IMR-90 (cell line): ENCODE measurements at regions of chr7 and their contacts with region 1.

Region 1: DNA sequence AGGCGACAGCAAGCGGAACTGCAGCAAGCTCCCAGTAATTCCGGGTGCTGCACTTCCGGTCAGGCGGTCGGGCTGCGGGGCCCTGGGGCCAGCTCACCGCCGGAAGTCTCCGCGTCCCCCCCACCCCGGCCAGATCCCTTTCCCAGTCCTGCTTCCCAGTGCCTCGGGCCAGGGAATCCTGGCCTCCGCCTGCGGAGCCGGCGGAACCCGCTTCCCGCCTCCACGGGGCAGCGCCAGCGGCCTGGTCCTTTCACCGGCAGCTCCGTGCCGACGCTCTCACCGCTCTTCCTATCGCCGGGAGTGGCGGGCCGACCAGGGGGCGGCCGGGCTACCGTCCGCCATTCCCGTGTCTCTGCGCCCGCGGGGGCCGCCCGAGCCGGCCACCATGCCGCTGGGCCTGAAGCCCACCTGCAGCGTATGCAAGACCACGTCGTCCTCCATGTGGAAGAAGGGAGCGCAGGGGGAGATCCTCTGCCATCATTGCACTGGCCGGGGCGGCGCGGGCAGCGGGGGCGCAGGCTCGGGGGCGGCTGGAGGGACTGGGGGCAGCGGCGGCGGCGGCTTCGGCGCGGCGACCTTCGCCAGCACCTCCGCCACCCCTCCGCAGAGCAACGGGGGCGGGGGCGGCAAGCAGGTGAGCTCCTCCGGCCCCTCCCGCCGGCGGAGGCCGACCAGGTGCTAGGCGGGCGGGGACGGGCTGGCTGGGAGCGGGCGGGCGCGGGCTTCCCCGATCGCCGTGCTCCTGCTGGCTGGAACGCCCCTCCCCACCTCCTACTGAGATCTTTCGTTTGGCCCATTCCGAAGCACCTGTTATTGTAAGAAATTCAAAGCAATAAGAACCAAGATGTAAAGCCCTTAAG is at the start of gene GATAD1:
- DNase-seq: peak; percentile 91
- ATAC-seq: peak; percentile 97
- H3K4me3 ChIP-seq: peak within 1 kb of the TSS; percentile 94
- H3K27ac ChIP-seq: peak within 1 kb of the TSS; percentile 89
- H3K4me1 ChIP-seq: 0 out of 2 replicates have a peak, but pooled peaks cover 2% of the 10 kb centered on the region
- H3K27me3 ChIP-seq: no peaks in the 10 kb centered on the region
- CTCF ChIP-seq: peak; percentile 97
- POLR2A ChIP-seq: peak; percentile 81
- RAD21 ChIP-seq: no peak
- total RNA-seq, gene GATAD1: 9.3 and 10.3 TPM in 2 replicates

Region 2: GRCh38 chr7:91264046-91264923 is 1183.3 kb before region 1 on chr7 and contains the start of gene FZD1:
- CTCF ChIA-PET with region 1: no interaction called
- POLR2A ChIA-PET with region 1: no interaction called
- dilution Hi-C with region 1: no loop called
- in situ Hi-C with region 1: no loop called
- intact Hi-C with region 1: loop called (anchors 1 kb)
- DNase-seq: peak; percentile 99
- ATAC-seq: peak; percentile 89
- H3K4me3 ChIP-seq: peak within 1 kb of the TSS; percentile 75
- H3K27ac ChIP-seq: peak within 1 kb of the TSS; percentile 89
- H3K4me1 ChIP-seq: peaks cover 4% of the 10 kb centered on the region
- H3K27me3 ChIP-seq: no peaks in the 10 kb centered on the region
- CTCF ChIP-seq: no peak
- POLR2A ChIP-seq: peak; percentile 63; the same call in 1 of the 2 replicates
- RAD21 ChIP-seq: peak; percentile 25; the same call in 1 of the 2 replicates
- total RNA-seq, gene FZD1: 3.6 and 4.4 TPM in 2 replicates

Region 3: DNA sequence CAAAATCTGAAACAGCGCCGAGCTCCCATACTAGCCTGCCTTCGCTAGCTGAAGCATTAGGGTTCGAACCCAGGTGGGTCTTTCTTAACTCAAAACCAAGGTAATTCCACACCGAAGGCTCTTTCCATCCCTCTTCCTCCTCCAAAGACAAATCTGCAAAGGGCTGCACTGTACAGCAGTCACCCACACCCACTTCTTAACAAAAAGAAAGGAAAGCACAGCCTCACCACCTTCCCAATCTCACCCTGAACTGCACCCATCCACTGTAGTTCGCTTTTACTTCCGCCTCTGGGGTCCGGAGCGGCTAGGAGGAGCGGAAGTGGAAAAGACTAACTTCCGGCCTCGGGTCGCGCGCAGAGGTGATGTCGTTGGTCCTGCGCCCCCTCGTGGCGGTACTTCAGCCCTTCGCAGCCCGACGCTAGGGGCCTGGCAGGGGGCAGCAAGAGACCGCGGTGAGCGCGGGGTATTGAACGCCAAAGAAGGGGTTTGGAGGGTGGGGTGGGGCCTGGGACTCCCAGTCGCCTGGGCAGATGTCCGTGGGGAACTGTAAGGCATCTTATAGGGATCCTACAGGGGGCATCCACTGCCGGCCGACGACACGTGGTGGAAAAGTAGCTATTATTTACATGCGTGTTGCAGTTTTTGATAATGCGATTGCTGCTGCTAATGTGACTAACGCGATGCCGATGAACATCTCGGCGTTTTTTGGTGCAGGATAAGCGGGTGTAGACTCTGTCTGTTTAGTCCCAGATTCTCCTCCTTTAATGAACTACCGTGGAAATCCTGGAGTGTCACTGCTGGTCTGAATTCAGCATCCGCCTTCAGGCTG is 566.9 kb before region 1 on chr7 and contains the start of gene MTERF1:
- CTCF ChIA-PET with region 1: interaction called, 4 read pairs
- POLR2A ChIA-PET with region 1: no interaction called
- dilution Hi-C with region 1: no loop called
- in situ Hi-C with region 1: loop called (anchors 10 kb)
- intact Hi-C with region 1: loop called (anchors 1 kb)
- DNase-seq: peak; percentile 88
- ATAC-seq: peak; percentile 96
- H3K4me3 ChIP-seq: peak within 1 kb of the TSS; percentile 97
- H3K27ac ChIP-seq: peak within 1 kb of the TSS; percentile 77
- H3K4me1 ChIP-seq: no peaks in the 10 kb centered on the region
- H3K27me3 ChIP-seq: no peaks in the 10 kb centered on the region
- CTCF ChIP-seq: peak; percentile 100
- POLR2A ChIP-seq: peak; percentile 45; the same call in 1 of the 2 replicates
- RAD21 ChIP-seq: peak; percentile 73
- total RNA-seq, gene MTERF1: 7.0 and 16.7 TPM in 2 replicates

Region 4: DNA sequence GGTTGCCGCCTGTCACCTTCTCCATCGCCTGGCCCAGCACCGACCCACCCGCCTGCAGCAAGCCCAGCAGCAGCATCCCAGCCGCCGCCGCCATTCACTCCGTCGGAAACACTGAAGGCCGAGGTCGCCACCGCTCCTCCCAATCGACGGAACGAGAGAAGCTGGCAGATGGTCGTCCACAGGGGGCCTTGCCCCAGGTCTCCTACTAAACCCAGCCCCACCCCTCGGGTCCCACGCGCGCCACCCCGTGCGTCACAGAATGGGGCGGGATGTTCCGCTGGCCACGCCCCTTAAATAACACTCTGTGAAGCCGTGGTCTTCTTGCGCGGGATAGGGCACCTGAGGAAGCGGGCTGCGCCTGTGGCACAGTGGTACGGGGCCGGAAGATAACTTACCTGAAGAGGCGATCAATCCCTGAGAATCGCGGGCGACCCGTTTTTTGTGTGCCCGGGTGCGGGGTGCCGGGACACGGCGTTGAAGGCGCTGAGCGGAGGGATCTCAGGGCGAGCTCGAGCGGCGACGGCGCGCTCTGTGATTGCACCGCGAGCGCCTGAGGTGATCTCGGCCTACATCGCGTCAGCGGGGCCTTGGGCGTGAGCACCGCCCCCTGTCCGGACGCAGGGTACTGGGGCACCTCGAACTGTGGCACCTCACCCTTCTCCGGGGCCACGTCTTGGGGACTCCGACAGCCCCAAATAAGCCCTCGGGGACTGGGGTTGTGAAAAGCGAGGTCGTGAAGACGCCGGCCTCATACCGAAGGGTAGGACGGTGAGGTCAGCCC is 313.1 kb before region 1 on chr7 and contains the start of gene CYP51A1:
- CTCF ChIA-PET with region 1: no interaction called
- POLR2A ChIA-PET with region 1: no interaction called
- dilution Hi-C with region 1: no loop called
- in situ Hi-C with region 1: no loop called
- intact Hi-C with region 1: loop called (anchors 2 kb)
- DNase-seq: peak; percentile 86
- ATAC-seq: peak; percentile 90
- H3K4me3 ChIP-seq: peak within 1 kb of the TSS; percentile 80
- H3K27ac ChIP-seq: peak within 1 kb of the TSS; percentile 94
- H3K4me1 ChIP-seq: no peaks in the 10 kb centered on the region
- H3K27me3 ChIP-seq: no peaks in the 10 kb centered on the region
- CTCF ChIP-seq: no peak
- POLR2A ChIP-seq: peak; percentile 73
- RAD21 ChIP-seq: no peak
- total RNA-seq, gene CYP51A1: 76.4 and 92.8 TPM in 2 replicates

Region 5: DNA sequence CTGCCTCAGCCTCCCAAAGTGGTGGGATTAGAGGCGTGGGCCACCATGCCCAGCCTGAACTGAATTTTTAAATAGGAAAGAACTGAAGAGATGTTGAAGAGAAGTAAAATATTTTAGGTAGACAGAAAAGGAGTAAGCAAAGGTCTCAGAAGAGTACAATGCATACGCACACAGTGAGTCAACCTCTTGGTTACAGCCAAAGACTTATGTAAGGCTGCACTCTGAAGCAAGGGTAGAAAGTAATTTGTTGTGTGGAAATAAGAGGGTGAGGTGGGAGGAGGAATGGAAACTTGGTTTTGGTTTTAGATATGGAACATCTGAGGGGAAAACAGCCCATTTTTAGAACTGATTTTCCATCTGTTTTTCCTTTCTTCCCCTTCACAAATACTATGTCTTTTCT is 219.5 kb before region 1 on chr7:
- CTCF ChIA-PET with region 1: no interaction called
- POLR2A ChIA-PET with region 1: no interaction called
- dilution Hi-C with region 1: no loop called
- in situ Hi-C with region 1: no loop called
- intact Hi-C with region 1: loop called (anchors 5 kb)
- DNase-seq: peak; percentile 15
- ATAC-seq: no peak
- H3K4me3 ChIP-seq: no peak overlapping the region
- H3K27ac ChIP-seq: no peak overlapping the region
- H3K4me1 ChIP-seq: no peaks in the 10 kb centered on the region
- H3K27me3 ChIP-seq: no peaks in the 10 kb centered on the region
- CTCF ChIP-seq: no peak
- POLR2A ChIP-seq: no peak
- RAD21 ChIP-seq: no peak

Region 6: DNA sequence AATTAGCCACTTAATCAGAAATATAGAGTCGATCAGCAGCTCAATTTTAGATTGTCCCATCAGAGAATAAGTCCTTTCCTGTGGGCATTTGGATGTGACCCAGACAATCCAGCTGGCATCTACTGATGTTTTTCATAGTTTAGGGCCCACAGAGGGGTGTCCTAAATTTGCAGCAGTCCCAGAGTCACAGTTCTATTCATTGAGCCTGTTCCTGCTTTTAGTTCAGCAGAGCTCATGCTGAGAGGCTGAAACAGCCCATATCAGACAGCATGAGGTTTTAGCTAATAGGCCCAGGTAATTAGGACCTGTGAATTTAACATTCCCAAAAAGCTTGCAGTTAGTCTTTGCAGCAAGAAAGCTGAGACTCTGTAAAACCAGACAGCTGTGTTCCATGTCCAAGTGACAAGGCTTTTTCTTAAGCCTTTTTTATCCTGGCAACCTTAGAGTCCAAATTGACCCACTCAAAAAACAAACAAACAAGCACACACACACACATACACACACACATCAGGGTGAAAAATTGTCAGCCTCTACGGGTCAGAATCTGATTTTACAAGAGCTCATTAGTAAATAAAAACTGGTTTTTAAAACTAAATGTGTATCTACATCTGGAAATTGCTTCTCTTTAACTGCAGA is 168.1 kb before region 1 on chr7:
- CTCF ChIA-PET with region 1: no interaction called
- POLR2A ChIA-PET with region 1: no interaction called
- dilution Hi-C with region 1: no loop called
- in situ Hi-C with region 1: no loop called
- intact Hi-C with region 1: no loop called
- DNase-seq: no peak
- ATAC-seq: no peak
- H3K4me3 ChIP-seq: no peak overlapping the region
- H3K27ac ChIP-seq: no peak overlapping the region
- H3K4me1 ChIP-seq: peaks cover 2% of the 10 kb centered on the region; the same call in 1 of the 2 replicates
- H3K27me3 ChIP-seq: no peaks in the 10 kb centered on the region
- CTCF ChIP-seq: no peak
- POLR2A ChIP-seq: no peak
- RAD21 ChIP-seq: no peak

Region 7: GRCh38 chr7:92425321-92425947 is 22.1 kb before region 1 on chr7:
- CTCF ChIA-PET with region 1: interaction called, 19 read pairs
- POLR2A ChIA-PET with region 1: no interaction called
- dilution Hi-C with region 1: no loop called
- in situ Hi-C with region 1: no loop called
- intact Hi-C with region 1: loop called (anchors 2 kb)
- DNase-seq: no peak
- ATAC-seq: no peak
- H3K4me3 ChIP-seq: no peak overlapping the region
- H3K27ac ChIP-seq: no peak overlapping the region
- H3K4me1 ChIP-seq: no peaks in the 10 kb centered on the region; the same call in 1 of the 2 replicates
- H3K27me3 ChIP-seq: peaks cover 3% of the 10 kb centered on the region
- CTCF ChIP-seq: no peak
- POLR2A ChIP-seq: no peak
- RAD21 ChIP-seq: no peak

Region 8: DNA sequence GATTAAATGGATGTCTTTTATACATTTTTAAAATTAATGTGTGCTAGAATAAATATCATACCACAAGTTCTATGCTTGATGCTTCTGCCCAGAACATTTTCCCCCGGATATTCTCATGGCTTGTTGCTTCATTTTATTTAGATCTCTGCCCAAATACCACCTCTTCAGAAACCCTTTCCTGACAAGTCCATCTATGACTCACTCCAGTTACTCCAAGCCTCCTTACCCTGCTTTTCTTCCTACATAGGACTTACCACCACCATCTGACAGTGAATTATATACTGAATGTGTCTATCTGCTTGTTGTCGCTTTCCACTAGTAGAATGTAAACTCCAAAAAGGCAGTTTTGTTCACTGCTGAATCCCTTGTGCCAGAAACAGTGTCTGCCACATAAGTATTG is 49.3 kb after region 1 on chr7:
- CTCF ChIA-PET with region 1: no interaction called
- POLR2A ChIA-PET with region 1: no interaction called
- dilution Hi-C with region 1: no loop called
- in situ Hi-C with region 1: no loop called
- intact Hi-C with region 1: no loop called
- DNase-seq: peak; percentile 62
- ATAC-seq: peak; percentile 73
- H3K4me3 ChIP-seq: no peak overlapping the region
- H3K27ac ChIP-seq: no peak overlapping the region
- H3K4me1 ChIP-seq: no peaks in the 10 kb centered on the region
- H3K27me3 ChIP-seq: no peaks in the 10 kb centered on the region
- CTCF ChIP-seq: no peak
- POLR2A ChIP-seq: no peak
- RAD21 ChIP-seq: no peak